A549 (cell line): ENCODE measurements at regions of chr14 and their contacts with region 1.

Region 1: GRCh38 chr14:20343092-20343861 is at the start of gene PARP2:
- DNase-seq: peak; percentile 96 to 99
- ATAC-seq: peak; percentile 99
- H3K4me3 ChIP-seq: peak within 1 kb of the TSS; percentile 82
- H3K27ac ChIP-seq: peak within 1 kb of the TSS; percentile 95 to 96
- H3K4me1 ChIP-seq: peaks cover 5% of the 10 kb centered on the region; the same call in 1 of the 3 replicates
- CTCF ChIP-seq: no peak
- EP300 ChIP-seq: no peak
- POLR2A ChIP-seq: peak; percentile 96
- RAD21 ChIP-seq: 0 out of 5 replicates have a peak, but pooled peaks of 1 of the 2 experiments have one; percentile 13
- polyA plus RNA-seq, gene PARP2: 39.8 and 42.3 TPM in 2 replicates

Region 2: GRCh38 chr14:20228681-20229080 is 114.6 kb before region 1 on chr14 and contains the start of gene OR11H7:
- CTCF ChIA-PET with region 1: no interaction called
- POLR2A ChIA-PET with region 1: no interaction called
- DNase-seq: no peak
- ATAC-seq: no peak
- H3K4me3 ChIP-seq: no peak within 1 kb of the TSS
- H3K27ac ChIP-seq: no peak within 1 kb of the TSS
- H3K4me1 ChIP-seq: no peaks in the 10 kb centered on the region
- CTCF ChIP-seq: no peak
- EP300 ChIP-seq: no peak
- POLR2A ChIP-seq: no peak
- RAD21 ChIP-seq: no peak
- polyA plus RNA-seq, gene OR11H7: not detected in 2 replicates

Region 3: DNA sequence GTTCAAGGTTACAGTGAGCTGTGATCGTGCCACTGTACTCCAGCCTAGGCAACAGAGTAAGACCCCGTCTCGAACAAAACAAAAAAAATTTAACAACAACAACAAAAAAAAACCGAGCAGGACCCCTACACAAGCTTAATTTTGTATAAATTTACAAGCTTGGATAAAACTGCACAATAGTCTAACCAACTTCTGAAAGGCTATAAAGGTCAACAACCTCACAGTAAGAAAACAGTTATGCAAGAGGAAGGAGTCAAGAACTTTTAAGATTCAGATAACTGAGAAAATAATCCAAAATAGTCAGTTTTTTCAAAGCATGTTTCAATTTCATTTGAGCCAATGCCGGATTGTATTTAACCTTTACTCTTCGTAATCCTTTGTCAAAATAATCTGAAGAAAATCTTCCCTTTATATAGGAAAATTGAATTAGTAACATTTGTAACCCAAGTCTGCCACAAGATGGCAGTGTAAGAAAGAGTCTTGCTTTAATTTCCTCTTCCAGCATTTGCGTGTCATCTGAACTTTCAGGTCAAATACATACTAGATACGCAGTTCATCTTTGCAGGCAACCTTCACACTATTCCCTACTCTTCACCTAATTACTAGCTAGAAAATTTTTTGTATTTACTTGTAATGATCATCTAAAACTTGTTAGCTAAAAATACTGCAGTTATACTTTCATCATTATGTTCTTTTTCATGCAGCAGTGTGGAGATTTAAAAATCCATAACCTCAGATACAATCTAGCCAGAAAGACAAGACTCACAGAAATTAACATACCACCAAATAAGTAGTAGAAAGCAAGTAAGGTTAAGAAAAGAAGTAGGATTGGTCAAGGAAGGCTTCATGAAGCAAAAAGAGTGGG is 16.0 kb before region 1 on chr14:
- CTCF ChIA-PET with region 1: interaction called, 60 read pairs
- POLR2A ChIA-PET with region 1: interaction called, 53 read pairs
- DNase-seq: peak; percentile 55 to 74
- ATAC-seq: peak in 1 of 2 experiments; percentile 61; a peak in 3 of 6 replicates
- H3K4me3 ChIP-seq: no peak overlapping the region
- H3K27ac ChIP-seq: no peak overlapping the region
- H3K4me1 ChIP-seq: peaks cover 35% of the 10 kb centered on the region
- CTCF ChIP-seq: peak; percentile 86
- EP300 ChIP-seq: no peak
- POLR2A ChIP-seq: no peak
- RAD21 ChIP-seq: peak; percentile 66 to 73

Region 4: GRCh38 chr14:20413045-20413799 is 69.9 kb after region 1 on chr14 and contains the start of gene TEP1:
- CTCF ChIA-PET with region 1: interaction called, 4 read pairs
- POLR2A ChIA-PET with region 1: interaction called, 19 read pairs
- DNase-seq: peak; percentile 82 to 88
- ATAC-seq: peak; percentile 97 to 98
- H3K4me3 ChIP-seq: peak within 1 kb of the TSS; percentile 61
- H3K27ac ChIP-seq: peak within 1 kb of the TSS; percentile 95 to 96
- H3K4me1 ChIP-seq: peaks cover 16% of the 10 kb centered on the region
- CTCF ChIP-seq: no peak
- EP300 ChIP-seq: no peak
- POLR2A ChIP-seq: peak; percentile 76
- RAD21 ChIP-seq: 0 out of 5 replicates have a peak, but pooled peaks of 1 of the 2 experiments have one; percentile 21
- polyA plus RNA-seq, gene TEP1: 17.5 and 22.2 TPM in 2 replicates

Region 5: GRCh38 chr14:20461274-20462001 is 118.2 kb after region 1 on chr14 and contains the start of gene PIP4P1:
- CTCF ChIA-PET with region 1: no interaction called
- POLR2A ChIA-PET with region 1: interaction called, 44 read pairs
- DNase-seq: peak; percentile 96 to 100
- ATAC-seq: peak; percentile 94 to 98
- H3K4me3 ChIP-seq: peak within 1 kb of the TSS; percentile 85
- H3K27ac ChIP-seq: peak within 1 kb of the TSS; percentile 85 to 92
- H3K4me1 ChIP-seq: peaks cover 31% of the 10 kb centered on the region
- CTCF ChIP-seq: no peak
- EP300 ChIP-seq: no peak
- POLR2A ChIP-seq: peak; percentile 69
- RAD21 ChIP-seq: no peak
- polyA plus RNA-seq, gene PIP4P1: 30.4 and 40.6 TPM in 2 replicates

Region 6: DNA sequence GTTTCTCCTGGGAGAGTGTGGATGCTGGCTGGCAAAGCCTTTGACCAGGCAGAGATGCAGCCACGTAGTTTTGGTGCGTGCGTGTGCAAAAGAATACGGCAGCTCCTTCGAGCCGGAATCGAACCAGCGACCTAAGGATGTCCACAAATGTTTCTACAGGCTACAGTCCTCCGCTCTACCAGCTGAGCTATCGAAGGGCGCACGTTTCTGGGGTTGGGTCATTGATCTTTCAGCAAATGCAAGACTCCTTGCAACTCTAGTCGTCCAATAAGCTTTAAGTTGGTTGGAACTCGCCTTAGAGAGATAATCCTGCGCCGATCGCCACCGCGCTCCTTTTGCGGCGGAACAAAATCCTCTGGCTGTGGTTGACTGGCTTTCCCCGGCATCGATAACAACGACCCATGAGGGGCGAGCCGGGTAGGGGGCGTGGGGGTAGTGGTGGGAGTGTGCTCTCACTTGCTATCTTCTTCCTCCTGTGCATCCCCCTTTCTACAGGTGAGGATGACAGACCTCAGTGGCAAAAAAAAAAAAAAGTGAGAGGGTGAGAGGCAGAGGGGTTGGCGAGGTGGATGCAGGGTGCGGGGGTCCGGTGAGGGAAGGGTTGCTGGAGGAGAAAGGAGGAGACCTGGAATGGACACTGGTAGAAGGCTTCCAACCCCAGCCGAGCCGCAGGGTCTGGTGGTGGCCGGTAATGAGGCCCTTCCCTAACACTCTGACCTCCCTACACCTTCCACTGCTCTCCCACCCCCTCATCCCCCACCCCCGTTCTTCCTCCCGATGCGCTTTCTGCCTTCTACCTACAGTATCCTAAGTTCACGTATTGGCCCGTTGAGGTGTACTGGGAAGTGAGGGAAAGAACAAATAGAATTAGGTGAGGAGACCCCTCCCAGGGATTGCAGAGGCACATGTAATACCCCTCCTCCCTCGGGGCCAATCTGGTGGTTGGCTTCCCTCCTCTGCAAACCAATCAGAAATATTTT is 310.0 kb after region 1 on chr14:
- CTCF ChIA-PET with region 1: no interaction called
- POLR2A ChIA-PET with region 1: interaction called, 10 read pairs
- DNase-seq: peak; percentile 64 to 97
- ATAC-seq: peak; percentile 75 to 83
- H3K4me3 ChIP-seq: peak overlapping the region; percentile 75
- H3K27ac ChIP-seq: peak overlapping the region; percentile 25 to 65; a peak in 3 of 6 replicates
- H3K4me1 ChIP-seq: peaks cover 26% of the 10 kb centered on the region; the same call in 2 of the 3 replicates
- CTCF ChIP-seq: no peak
- EP300 ChIP-seq: no peak
- POLR2A ChIP-seq: no peak
- RAD21 ChIP-seq: no peak; a peak in 1 of 5 replicates